Activated B cell treated with CpG ODN at 0.5 μM for 24 hours (primary cell): ENCODE measurements at regions of chr1 and their contacts with region 1.

Region 1: GRCh38 chr1:31944205-31945089 is 6.3 kb upstream of the PTP4A2 start:
- DNase-seq: peak; percentile 75
- ATAC-seq: peak; percentile 77
- H3K4me3 Mint-ChIP-seq: peak overlapping the region; percentile 89
- H3K27ac Mint-ChIP-seq: peak overlapping the region; percentile 91
- H3K4me1 Mint-ChIP-seq: peaks cover 51% of the 10 kb centered on the region
- H3K27me3 Mint-ChIP-seq: no peaks in the 10 kb centered on the region
- CTCF ChIP-seq: no peak

Region 2: GRCh38 chr1:31715087-31715872 is 229.2 kb before region 1 on chr1:
- CTCF ChIA-PET with region 1: no interaction called
- POLR2A ChIA-PET with region 1: no interaction called
- intact Hi-C with region 1: no loop called
- DNase-seq: peak; percentile 33
- ATAC-seq: peak; percentile 74
- H3K4me3 Mint-ChIP-seq: peak overlapping the region; percentile 77
- H3K27ac Mint-ChIP-seq: no peak overlapping the region
- H3K4me1 Mint-ChIP-seq: peaks cover 13% of the 10 kb centered on the region
- H3K27me3 Mint-ChIP-seq: peaks cover 47% of the 10 kb centered on the region
- CTCF ChIP-seq: no peak

Region 3: DNA sequence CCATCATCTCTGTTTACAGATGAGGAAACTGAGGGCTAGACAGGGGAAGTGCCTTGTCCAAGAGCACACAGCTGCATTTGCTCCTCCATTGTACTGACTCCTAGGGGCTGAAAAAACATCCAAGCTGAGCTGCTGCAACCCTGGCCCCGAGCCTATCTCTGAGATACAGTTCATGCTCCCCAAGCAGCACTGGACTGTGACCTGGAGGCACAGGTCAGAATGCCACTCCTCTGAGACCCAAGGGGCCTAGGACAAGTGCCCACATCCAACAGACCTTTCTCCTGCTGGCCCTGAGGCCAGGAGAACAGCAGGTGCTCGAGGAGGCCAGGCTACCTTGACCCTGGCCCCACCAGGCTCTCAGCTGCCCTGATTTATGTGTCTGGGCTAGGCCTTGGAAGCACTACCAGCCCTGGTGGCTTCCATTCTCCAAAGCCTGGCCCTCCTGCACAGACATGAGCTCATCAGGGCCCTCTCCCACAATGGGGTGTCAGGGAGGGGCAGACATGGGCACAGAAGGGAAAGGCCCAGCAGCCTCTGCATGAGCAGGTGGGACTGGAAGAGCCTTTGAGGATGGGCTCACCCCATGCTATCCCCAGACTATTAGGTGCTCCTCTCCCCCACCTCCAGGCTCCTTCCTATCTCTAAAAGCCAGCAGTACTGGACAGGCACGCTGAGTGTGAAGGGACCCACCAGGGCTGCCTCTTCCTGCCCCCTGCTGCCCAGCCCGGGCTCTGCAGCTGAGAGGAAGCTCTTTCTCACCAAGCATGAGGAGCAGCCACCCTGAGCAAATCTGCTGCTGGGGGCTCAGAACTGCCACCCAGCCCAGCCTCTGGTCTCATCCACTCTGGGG is 199.1 kb before region 1 on chr1:
- CTCF ChIA-PET with region 1: no interaction called
- POLR2A ChIA-PET with region 1: no interaction called
- intact Hi-C with region 1: no loop called
- DNase-seq: no peak
- ATAC-seq: peak; percentile 64
- H3K4me3 Mint-ChIP-seq: no peak overlapping the region
- H3K27ac Mint-ChIP-seq: no peak overlapping the region
- H3K4me1 Mint-ChIP-seq: peaks cover 37% of the 10 kb centered on the region
- H3K27me3 Mint-ChIP-seq: peaks cover 4% of the 10 kb centered on the region
- CTCF ChIP-seq: no peak

Region 4: GRCh38 chr1:31855038-31855845 is 89.2 kb before region 1 on chr1:
- CTCF ChIA-PET with region 1: no interaction called
- POLR2A ChIA-PET with region 1: no interaction called
- intact Hi-C with region 1: no loop called
- DNase-seq: no peak
- ATAC-seq: no peak
- H3K4me3 Mint-ChIP-seq: no peak overlapping the region
- H3K27ac Mint-ChIP-seq: no peak overlapping the region
- H3K4me1 Mint-ChIP-seq: no peaks in the 10 kb centered on the region
- H3K27me3 Mint-ChIP-seq: no peaks in the 10 kb centered on the region
- CTCF ChIP-seq: no peak

Region 5: DNA sequence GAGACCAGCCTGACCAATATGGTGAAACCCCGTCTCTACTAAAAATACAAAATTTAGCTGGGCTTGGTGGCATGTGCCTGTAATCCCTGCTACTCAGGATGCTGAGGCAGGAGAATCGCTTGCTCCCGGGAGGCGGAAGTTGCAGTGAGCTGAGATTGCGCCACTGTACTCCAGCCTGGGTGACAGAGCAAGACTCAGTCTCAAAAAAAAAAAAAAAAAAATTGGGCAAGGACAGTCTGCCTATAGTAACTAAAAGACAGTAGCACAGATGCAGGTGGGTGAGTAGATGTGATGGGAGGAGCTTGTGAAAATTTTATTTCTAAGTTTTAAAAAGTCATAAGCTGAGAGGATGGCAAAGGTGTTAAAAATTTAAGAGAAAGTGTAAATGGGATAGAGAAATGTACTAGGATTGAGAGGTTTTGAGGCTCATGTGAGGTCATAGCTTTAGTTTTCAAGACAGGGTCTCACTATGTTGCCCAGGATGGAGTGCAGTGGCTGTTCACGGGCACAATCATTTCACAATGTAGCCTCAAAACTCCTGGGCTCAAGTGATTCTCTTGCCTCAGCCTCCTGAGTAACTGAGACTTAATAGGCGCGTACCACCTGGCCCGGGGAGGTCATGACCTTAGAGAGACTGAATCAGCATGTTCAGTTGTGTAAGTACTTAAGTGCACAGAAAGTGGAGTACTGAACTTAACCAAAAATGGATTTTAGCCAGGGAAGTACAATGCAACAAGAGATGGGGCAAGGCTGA is 39.9 kb before region 1 on chr1:
- CTCF ChIA-PET with region 1: interaction called, 3 read pairs
- POLR2A ChIA-PET with region 1: interaction called, 23 read pairs
- intact Hi-C with region 1: no loop called
- DNase-seq: no peak
- ATAC-seq: no peak
- H3K4me3 Mint-ChIP-seq: no peak overlapping the region
- H3K27ac Mint-ChIP-seq: peak overlapping the region; percentile 32
- H3K4me1 Mint-ChIP-seq: peaks cover 28% of the 10 kb centered on the region
- H3K27me3 Mint-ChIP-seq: no peaks in the 10 kb centered on the region
- CTCF ChIP-seq: no peak

Region 6: GRCh38 chr1:31923901-31924535 is 20.4 kb before region 1 on chr1:
- CTCF ChIA-PET with region 1: interaction called, 3 read pairs
- POLR2A ChIA-PET with region 1: interaction called, 36 read pairs
- intact Hi-C with region 1: no loop called
- DNase-seq: no peak
- ATAC-seq: no peak
- H3K4me3 Mint-ChIP-seq: no peak overlapping the region
- H3K27ac Mint-ChIP-seq: peak overlapping the region; percentile 30
- H3K4me1 Mint-ChIP-seq: peaks cover 82% of the 10 kb centered on the region
- H3K27me3 Mint-ChIP-seq: no peaks in the 10 kb centered on the region
- CTCF ChIP-seq: no peak

Region 7: DNA sequence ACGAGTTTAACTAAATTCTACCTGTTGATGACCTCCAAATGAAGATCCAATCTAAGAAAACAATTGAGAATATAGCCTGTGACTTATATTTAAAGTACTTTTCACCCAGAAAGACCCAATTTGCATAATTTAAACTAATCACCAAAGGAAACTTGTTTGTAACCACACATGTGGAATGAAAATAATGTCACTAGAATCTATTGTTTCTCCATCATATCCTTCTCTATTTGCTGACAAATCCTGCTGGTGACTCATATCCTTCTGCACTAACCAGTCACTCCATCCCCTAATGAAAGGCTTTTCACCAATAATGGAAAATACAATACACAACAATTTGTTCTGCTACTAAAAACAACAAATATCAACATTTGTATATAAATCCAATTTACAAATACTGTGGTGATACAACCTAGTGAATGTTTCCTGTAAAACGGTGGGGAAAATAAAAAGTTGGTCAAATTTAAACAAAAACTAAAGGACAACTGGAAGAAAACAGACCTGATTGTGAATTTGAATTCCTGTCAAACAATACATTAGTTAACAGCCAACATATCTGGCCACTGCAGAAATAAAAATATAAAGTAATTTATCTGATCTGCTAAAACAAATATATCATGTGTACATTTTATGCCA is 12.7 kb before region 1 on chr1:
- CTCF ChIA-PET with region 1: no interaction called
- POLR2A ChIA-PET with region 1: interaction called, 36 read pairs
- intact Hi-C with region 1: no loop called
- DNase-seq: no peak
- ATAC-seq: no peak
- H3K4me3 Mint-ChIP-seq: peak overlapping the region; percentile 32
- H3K27ac Mint-ChIP-seq: peak overlapping the region; percentile 84
- H3K4me1 Mint-ChIP-seq: peaks cover 97% of the 10 kb centered on the region
- H3K27me3 Mint-ChIP-seq: no peaks in the 10 kb centered on the region
- CTCF ChIP-seq: no peak

Region 8: GRCh38 chr1:31955917-31956736 is 11.7 kb after region 1 on chr1:
- CTCF ChIA-PET with region 1: interaction called, 75 read pairs
- POLR2A ChIA-PET with region 1: interaction called, 235 read pairs
- intact Hi-C with region 1: loop called (anchors 1 kb)
- DNase-seq: peak; percentile 56
- ATAC-seq: peak; percentile 97
- H3K4me3 Mint-ChIP-seq: peak overlapping the region; percentile 72
- H3K27ac Mint-ChIP-seq: peak overlapping the region; percentile 93
- H3K4me1 Mint-ChIP-seq: peaks cover 41% of the 10 kb centered on the region
- H3K27me3 Mint-ChIP-seq: no peaks in the 10 kb centered on the region
- CTCF ChIP-seq: no peak

Region 9: GRCh38 chr1:32005522-32005921 is 61.1 kb after region 1 on chr1:
- CTCF ChIA-PET with region 1: interaction called, 4 read pairs
- POLR2A ChIA-PET with region 1: interaction called, 13 read pairs
- intact Hi-C with region 1: no loop called
- DNase-seq: no peak
- ATAC-seq: peak; percentile 79
- H3K4me3 Mint-ChIP-seq: no peak overlapping the region
- H3K27ac Mint-ChIP-seq: peak overlapping the region; percentile 57
- H3K4me1 Mint-ChIP-seq: peaks cover 31% of the 10 kb centered on the region
- H3K27me3 Mint-ChIP-seq: no peaks in the 10 kb centered on the region
- CTCF ChIP-seq: no peak